IMR-90 (cell line): ENCODE measurements at regions of chr15 and their contacts with region 1.

Region 1: GRCh38 chr15:35266030-35266429 is 180.9 kb upstream of the NANOGP8 start:
- DNase-seq: no peak
- ATAC-seq: no peak
- H3K4me3 ChIP-seq: no peak overlapping the region
- H3K27ac ChIP-seq: no peak overlapping the region
- H3K4me1 ChIP-seq: 0 out of 2 replicates have a peak, but pooled peaks cover 2% of the 10 kb centered on the region
- H3K27me3 ChIP-seq: no peaks in the 10 kb centered on the region
- CTCF ChIP-seq: no peak
- POLR2A ChIP-seq: no peak
- RAD21 ChIP-seq: no peak

Region 2: DNA sequence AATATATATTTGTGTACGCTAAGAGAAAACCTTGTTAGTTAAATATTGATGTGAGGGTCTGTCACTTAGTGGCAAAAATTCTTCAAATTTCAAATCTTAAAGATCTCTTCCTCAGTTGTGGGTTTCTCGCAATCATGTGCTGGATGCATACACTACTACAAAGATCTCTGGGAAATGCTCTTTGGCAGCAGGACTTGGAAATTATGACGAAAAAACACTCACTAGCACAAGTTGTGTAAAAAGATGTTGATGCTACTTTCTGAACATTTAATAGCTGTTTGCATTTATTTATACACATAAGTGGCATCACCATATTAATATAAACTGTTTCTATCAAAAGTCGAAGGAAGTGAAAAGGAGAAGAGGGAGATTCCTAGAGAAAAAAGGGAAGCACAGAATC is 170.1 kb before region 1 on chr15:
- CTCF ChIA-PET with region 1: no interaction called
- POLR2A ChIA-PET with region 1: interaction called, 4 read pairs
- dilution Hi-C with region 1: no loop called
- in situ Hi-C with region 1: no loop called
- intact Hi-C with region 1: loop called (anchors 5 kb)
- DNase-seq: no peak
- ATAC-seq: no peak
- H3K4me3 ChIP-seq: no peak overlapping the region
- H3K27ac ChIP-seq: no peak overlapping the region
- H3K4me1 ChIP-seq: no peaks in the 10 kb centered on the region
- H3K27me3 ChIP-seq: no peaks in the 10 kb centered on the region
- CTCF ChIP-seq: no peak
- POLR2A ChIP-seq: no peak
- RAD21 ChIP-seq: no peak